ENCODE measurements at regions of chr1 and their contacts with region 1.

Region 1: DNA sequence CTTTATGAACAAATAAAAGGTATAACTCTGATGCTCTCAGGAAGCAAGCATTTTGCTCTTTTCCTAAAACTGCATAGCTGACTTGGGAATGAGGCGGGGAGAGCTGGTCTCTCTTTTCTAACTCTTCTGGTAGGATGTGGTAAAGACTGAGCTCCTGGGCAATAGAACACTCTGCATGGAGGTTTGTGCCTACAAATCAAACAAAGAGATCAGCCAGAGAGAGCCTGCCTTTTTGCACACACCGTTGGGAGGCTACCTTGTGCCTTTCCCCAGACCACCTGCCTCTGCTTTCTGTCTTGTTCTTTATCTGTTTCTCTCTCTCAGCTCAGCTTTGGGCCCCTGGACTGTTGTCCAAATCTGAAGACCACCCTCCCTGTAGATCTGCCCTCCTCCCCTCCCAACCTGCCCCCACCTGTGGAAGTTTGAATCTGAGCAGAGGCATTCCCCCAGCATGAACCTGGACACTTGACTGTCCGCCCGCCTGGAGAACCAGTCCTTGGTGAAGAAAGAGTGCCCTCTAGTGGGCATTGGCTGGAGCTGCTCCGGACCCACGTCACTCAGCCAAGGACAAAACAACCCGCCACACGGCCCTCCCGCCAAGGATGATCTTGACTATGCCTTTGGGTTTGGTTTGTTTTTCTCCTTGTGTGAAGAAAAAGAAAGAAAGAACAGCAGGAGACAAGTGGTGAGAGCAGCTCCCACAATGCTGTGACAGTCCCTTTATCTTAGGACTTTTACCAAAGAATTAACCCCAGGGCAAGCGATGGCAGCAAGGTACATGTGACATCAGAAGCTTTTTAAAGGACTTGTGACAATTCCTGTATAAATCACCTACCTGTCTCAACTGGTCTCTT is 228.2 kb downstream of the PBX1 start:
- DNase-seq: peak; percentile 9 to 61 (median 29)
- ATAC-seq: peak; percentile 41
- H3K4me3 ChIP-seq: no peak overlapping the region
- H3K4me3 Mint-ChIP-seq: no peak overlapping the region
- H3K27ac ChIP-seq: no peak overlapping the region
- H3K27ac Mint-ChIP-seq: no peak overlapping the region
- H3K4me1 ChIP-seq: peaks cover 4% of the 10 kb centered on the region
- H3K4me1 Mint-ChIP-seq: no peaks in the 10 kb centered on the region
- H3K27me3 ChIP-seq: no peaks in the 10 kb centered on the region
- H3K27me3 Mint-ChIP-seq: peaks cover 18% of the 10 kb centered on the region
- CTCF ChIP-seq: peak; percentile 66

Region 2: GRCh38 chr1:162847839-162848453 is 1939.3 kb before region 1 on chr1:
- CTCF ChIA-PET with region 1: no interaction called
- POLR2A ChIA-PET with region 1: no interaction called
- intact Hi-C with region 1: loop called in 1 of 2 experiments (anchors 5 kb)
- DNase-seq: peak; percentile 62 to 89 (median 77)
- ATAC-seq: peak; percentile 29
- H3K4me3 ChIP-seq: no peak overlapping the region
- H3K4me3 Mint-ChIP-seq: no peak overlapping the region
- H3K27ac ChIP-seq: no peak overlapping the region
- H3K27ac Mint-ChIP-seq: no peak overlapping the region
- H3K4me1 ChIP-seq: no peaks in the 10 kb centered on the region
- H3K4me1 Mint-ChIP-seq: no peaks in the 10 kb centered on the region
- H3K27me3 ChIP-seq: peaks cover 0 to 2% of the 10 kb centered on the region in 2 experiments
- H3K27me3 Mint-ChIP-seq: peaks cover 28% of the 10 kb centered on the region
- CTCF ChIP-seq: peak; percentile 93

Region 3: GRCh38 chr1:163361123-163361934 is 1425.9 kb before region 1 on chr1:
- CTCF ChIA-PET with region 1: no interaction called
- POLR2A ChIA-PET with region 1: no interaction called
- intact Hi-C with region 1: loop called in 1 of 2 experiments (anchors 5 kb)
- DNase-seq: peak in 3 of 14 experiments; percentile 2 to 9 (median 2)
- ATAC-seq: no peak
- H3K4me3 ChIP-seq: no peak overlapping the region
- H3K4me3 Mint-ChIP-seq: no peak overlapping the region
- H3K27ac ChIP-seq: no peak overlapping the region
- H3K27ac Mint-ChIP-seq: no peak overlapping the region
- H3K4me1 ChIP-seq: no peaks in the 10 kb centered on the region
- H3K4me1 Mint-ChIP-seq: no peaks in the 10 kb centered on the region
- H3K27me3 ChIP-seq: peaks cover 0 to 3% of the 10 kb centered on the region in 2 experiments
- H3K27me3 Mint-ChIP-seq: no peaks in the 10 kb centered on the region
- CTCF ChIP-seq: no peak

Region 4: DNA sequence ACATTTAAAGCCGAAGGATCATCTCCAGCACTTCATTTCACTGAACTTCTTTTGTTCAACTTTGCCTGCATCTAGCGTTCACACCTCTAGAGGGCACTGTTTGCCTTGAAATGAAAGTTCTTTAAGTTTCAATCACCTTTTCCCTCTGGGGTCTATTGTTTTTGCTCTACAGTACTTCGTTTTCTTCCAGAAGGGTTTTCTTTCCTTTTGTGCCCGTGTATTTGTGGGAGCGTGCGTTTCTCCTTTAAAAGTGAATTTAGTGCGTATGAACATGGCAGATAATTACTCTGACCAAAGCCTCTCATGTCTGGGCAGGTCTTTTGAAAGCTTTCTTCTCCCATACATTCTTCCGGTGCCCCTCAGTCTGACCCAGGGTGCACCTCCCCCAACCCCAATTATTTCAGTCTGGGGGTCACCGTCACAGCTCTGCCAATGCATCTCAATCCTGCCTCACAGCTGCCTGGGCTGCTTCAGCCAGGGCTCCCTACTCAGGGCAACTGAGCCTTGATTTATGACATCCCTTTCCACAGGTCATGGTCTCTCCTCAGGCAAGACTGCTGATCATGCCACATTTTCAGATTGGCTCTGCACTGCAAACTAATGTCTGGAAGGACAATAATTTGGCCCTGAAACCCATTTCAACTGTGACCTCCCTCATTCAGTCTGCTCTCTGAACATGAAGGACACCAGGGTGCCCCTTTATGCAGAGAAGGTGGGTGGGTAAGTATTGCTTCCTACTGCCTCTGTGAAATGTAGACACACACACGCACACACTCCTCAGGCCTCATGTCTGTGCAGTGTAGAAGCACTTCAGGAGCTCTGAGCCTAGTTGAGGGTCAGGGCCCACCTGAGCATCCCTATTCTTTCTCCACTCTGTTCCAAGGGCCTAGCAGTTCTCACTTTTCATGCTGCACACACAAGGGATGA is 1376.9 kb before region 1 on chr1:
- CTCF ChIA-PET with region 1: no interaction called
- POLR2A ChIA-PET with region 1: no interaction called
- intact Hi-C with region 1: loop called in 1 of 2 experiments (anchors 5 kb)
- DNase-seq: peak in 4 of 14 experiments; percentile 16 to 25 (median 19)
- ATAC-seq: no peak
- H3K4me3 ChIP-seq: no peak overlapping the region
- H3K4me3 Mint-ChIP-seq: no peak overlapping the region
- H3K27ac ChIP-seq: no peak overlapping the region
- H3K27ac Mint-ChIP-seq: no peak overlapping the region
- H3K4me1 ChIP-seq: no peaks in the 10 kb centered on the region
- H3K4me1 Mint-ChIP-seq: peaks cover 7% of the 10 kb centered on the region
- H3K27me3 ChIP-seq: peaks cover 0 to 5% of the 10 kb centered on the region in 2 experiments
- H3K27me3 Mint-ChIP-seq: peaks cover 38% of the 10 kb centered on the region
- CTCF ChIP-seq: peak; percentile 59

Region 5: GRCh38 chr1:163528710-163529348 is 1258.4 kb before region 1 on chr1:
- CTCF ChIA-PET with region 1: no interaction called
- POLR2A ChIA-PET with region 1: no interaction called
- intact Hi-C with region 1: loop called (anchors 2 to 5 kb)
- DNase-seq: peak in 1 of 14 experiments; percentile 4
- ATAC-seq: no peak
- H3K4me3 ChIP-seq: no peak overlapping the region
- H3K4me3 Mint-ChIP-seq: no peak overlapping the region
- H3K27ac ChIP-seq: no peak overlapping the region
- H3K27ac Mint-ChIP-seq: no peak overlapping the region
- H3K4me1 ChIP-seq: no peaks in the 10 kb centered on the region
- H3K4me1 Mint-ChIP-seq: no peaks in the 10 kb centered on the region
- H3K27me3 ChIP-seq: no peaks in the 10 kb centered on the region
- H3K27me3 Mint-ChIP-seq: no peaks in the 10 kb centered on the region
- CTCF ChIP-seq: peak; percentile 34

Region 6: DNA sequence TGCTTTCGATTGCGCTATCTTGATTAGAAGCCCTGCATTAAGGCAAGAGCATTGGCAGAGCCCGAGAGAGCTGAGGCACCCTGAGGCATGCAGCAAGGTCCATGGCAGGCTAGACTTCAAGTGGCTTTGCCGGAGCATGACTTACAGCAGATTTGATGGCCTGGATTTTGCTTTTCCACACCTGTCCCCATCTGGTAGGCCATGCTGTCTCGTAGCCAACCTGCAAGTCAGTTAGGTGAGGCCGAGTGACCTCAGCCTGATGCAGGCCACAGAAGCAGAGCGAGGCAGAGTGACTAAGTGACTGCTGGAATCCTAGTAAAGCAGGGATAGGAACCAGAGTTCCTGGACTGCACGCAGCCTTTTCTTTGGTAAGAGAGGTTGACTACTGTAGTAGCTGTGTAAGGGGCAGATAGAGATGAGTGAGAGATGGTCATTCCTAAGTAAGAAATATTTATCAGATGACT is 79.3 kb before region 1 on chr1:
- CTCF ChIA-PET with region 1: no interaction called
- POLR2A ChIA-PET with region 1: no interaction called
- intact Hi-C with region 1: no loop called
- DNase-seq: no peak
- ATAC-seq: no peak
- H3K4me3 ChIP-seq: no peak overlapping the region
- H3K4me3 Mint-ChIP-seq: no peak overlapping the region
- H3K27ac ChIP-seq: no peak overlapping the region
- H3K27ac Mint-ChIP-seq: no peak overlapping the region
- H3K4me1 ChIP-seq: no peaks in the 10 kb centered on the region
- H3K4me1 Mint-ChIP-seq: no peaks in the 10 kb centered on the region
- H3K27me3 ChIP-seq: no peaks in the 10 kb centered on the region
- H3K27me3 Mint-ChIP-seq: peaks cover 8% of the 10 kb centered on the region
- CTCF ChIP-seq: no peak

Measured in CD4-positive, alpha-beta T cell (primary cell).